ENCODE measurements at regions of chr11 and their contacts with region 1.

Region 1: GRCh38 chr11:20355221-20356219 is 8.0 kb upstream of the HTATIP2 start:
- DNase-seq: peak in 21 of 42 donors; percentile 24 to 77 (median 40)

Region 2: DNA sequence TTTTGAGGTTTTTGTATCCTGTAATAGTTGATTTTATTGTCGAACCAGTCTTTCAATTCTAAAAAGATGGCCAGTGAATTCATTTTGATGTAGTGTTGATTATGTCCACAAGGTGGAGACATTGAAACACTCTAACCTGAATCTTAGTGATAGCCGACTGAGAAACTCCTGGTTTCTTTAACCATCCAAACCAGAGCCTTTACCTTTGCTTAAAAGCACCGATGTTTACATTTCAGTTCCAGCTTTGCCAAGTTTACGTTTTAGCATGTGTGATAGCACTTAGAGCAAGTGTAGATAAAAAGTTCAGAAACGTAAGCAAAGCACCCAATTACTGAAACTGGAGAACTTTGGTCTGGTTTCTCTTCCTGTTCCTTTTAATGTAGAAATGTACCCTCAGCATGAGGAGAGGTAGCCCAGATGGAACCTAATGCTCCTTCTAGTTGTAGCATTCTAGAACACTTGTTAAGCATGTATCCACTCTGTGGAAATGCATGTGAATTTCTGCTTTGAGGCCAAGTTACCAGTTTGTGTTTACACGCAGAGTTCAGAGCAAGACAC is 403.9 kb before region 1 on chr11:
- intact Hi-C with region 1: loop called (anchors 10 kb)
- DNase-seq: peak in 4 of 42 donors; percentile 13 to 58 (median 42)

Region 3: GRCh38 chr11:20127671-20128527 is 227.6 kb before region 1 on chr11:
- intact Hi-C with region 1: loop called (anchors 5 kb)
- DNase-seq: peak; percentile 62 to 96 (median 90)